ENCODE measurements at regions of chr1 and their contacts with region 1.

Region 1: DNA sequence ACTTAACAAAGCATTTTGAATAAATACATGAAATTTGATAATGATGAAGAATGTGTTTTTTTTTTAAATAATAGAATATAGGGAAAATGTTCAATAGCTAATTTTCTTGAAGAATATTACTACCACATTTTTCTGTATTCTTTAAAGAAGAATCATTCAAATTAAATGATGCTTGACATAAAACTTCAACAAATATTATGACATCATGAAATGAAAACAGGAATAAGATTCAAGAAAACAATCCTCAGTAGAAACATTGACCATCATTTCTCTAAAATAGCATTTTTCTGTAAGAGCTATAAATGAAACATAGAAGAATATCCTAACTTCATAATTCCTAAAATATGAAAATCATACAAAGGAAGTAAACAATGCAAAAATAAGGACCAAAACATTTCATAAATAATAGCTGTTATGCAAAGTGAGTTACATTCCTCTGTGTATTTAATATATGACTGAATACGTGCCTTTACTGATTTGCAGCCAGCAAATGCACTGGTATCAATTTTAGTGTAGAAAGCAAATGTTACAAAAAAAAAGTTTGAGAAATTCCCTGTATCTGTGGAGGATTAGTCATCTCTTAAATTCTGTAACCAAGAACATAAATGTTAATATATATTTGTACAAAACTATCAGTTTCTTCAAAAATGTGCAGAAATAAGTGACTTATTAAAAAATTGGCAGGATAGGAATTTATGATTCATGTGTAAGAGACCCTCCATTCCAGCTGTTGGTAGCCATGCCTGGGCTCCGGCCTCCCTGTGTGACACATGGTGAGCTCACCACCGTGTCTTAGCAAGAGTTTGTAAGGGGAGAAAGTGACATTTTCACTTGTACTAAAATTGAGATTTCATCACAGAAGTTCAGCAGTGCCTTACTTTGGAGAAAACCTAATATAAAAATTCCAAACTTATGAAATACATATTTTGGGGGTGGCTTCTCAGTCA is 15.0 kb upstream of the PTPN14 start:
- DNase-seq: no peak
- ATAC-seq: no peak
- H3K4me3 ChIP-seq: no peak overlapping the region
- H3K27ac ChIP-seq: no peak overlapping the region
- H3K4me1 ChIP-seq: no peaks in the 10 kb centered on the region
- H3K27me3 ChIP-seq: peaks cover 0 to 6% of the 10 kb centered on the region in 2 experiments; a peak in 2 of 5 replicates
- CTCF ChIP-seq: no peak
- EP300 ChIP-seq: no peak
- POLR2A ChIP-seq: no peak
- RAD21 ChIP-seq: no peak

Region 2: GRCh38 chr1:214427871-214428277 is 138.6 kb before region 1 on chr1:
- CTCF ChIA-PET with region 1: no interaction called
- POLR2A ChIA-PET with region 1: no interaction called
- in situ Hi-C with region 1: loop called (anchors 10 kb)
- intact Hi-C with region 1: no loop called
- DNase-seq: peak; percentile 41
- ATAC-seq: peak; percentile 73
- H3K4me3 ChIP-seq: no peak overlapping the region
- H3K27ac ChIP-seq: no peak overlapping the region
- H3K4me1 ChIP-seq: peaks cover 10% of the 10 kb centered on the region
- H3K27me3 ChIP-seq: no peaks in the 10 kb centered on the region; a peak in 1 of 5 replicates
- CTCF ChIP-seq: no peak
- EP300 ChIP-seq: no peak
- POLR2A ChIP-seq: no peak
- RAD21 ChIP-seq: no peak

Region 3: DNA sequence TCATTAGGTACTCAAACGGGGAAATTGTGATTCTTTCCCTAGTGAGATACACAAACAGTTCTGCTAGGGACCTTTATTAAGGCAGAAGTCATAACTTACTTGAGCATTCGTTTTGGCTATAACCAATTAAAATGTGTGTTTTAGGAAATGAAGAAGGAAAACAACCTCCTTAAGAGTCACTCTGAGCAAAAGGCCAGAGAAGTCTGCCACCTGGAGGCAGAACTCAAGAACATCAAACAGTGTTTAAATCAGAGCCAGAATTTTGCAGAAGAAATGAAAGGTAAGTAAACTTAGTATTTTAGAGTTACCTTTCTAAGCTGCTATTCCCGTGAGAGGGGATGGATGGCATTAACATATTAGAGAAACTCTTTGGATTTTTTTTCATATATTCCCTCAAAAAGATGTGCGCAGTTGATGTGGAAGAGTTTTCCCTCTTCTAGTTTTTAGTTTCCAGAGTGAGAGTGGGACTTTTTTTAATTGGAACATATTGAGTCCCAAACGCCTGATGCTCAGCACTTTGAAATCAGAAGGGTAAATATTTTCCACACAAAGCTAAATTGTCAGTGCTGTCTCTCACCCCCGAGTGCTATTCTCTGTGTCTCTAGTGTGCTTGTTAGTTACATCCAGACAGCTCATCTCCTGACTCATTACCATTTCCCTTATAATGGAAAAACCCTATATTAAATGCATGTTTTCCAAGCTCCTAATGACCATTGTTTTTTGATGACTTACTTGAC is 71.5 kb after region 1 on chr1:
- CTCF ChIA-PET with region 1: no interaction called
- POLR2A ChIA-PET with region 1: no interaction called
- in situ Hi-C with region 1: no loop called
- intact Hi-C with region 1: no loop called
- DNase-seq: peak; percentile 15
- ATAC-seq: peak; percentile 54; the same call in 2 of the 3 replicates
- H3K4me3 ChIP-seq: no peak overlapping the region
- H3K27ac ChIP-seq: no peak overlapping the region
- H3K4me1 ChIP-seq: no peaks in the 10 kb centered on the region
- H3K27me3 ChIP-seq: no peaks in the 10 kb centered on the region
- CTCF ChIP-seq: peak; percentile 43
- EP300 ChIP-seq: no peak
- POLR2A ChIP-seq: no peak
- RAD21 ChIP-seq: no peak

Region 4: DNA sequence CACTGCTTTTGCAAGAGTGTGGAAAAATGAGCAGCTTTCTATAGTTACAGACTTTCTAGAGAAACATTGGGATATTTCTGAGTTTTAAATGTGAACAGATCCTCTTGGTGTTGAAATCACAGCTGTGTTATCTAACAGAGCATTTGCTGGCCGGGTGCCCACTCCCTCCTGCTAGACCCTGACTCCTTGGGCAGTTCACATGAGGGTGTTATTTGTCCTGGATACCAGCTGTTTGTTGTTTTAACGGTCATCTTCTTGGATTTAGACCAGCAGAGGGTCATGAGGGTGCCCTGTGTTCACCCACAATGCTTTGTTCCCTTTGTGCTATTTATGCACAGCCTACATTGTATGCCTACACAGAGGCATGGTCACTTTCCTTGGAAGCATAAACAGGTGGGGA is 103.7 kb after region 1 on chr1:
- CTCF ChIA-PET with region 1: no interaction called
- POLR2A ChIA-PET with region 1: no interaction called
- in situ Hi-C with region 1: no loop called
- intact Hi-C with region 1: no loop called
- DNase-seq: peak; percentile 67
- ATAC-seq: peak; percentile 86
- H3K4me3 ChIP-seq: no peak overlapping the region
- H3K27ac ChIP-seq: peak overlapping the region; percentile 49
- H3K4me1 ChIP-seq: peaks cover 17% of the 10 kb centered on the region
- H3K27me3 ChIP-seq: no peaks in the 10 kb centered on the region
- CTCF ChIP-seq: no peak
- EP300 ChIP-seq: peak in 1 of 2 experiments; percentile 46; a peak in 1 of 4 replicates
- POLR2A ChIP-seq: no peak
- RAD21 ChIP-seq: no peak